OCI-LY7 (cell line): ENCODE measurements at regions of chr17 and their contacts with region 1.

Region 1: DNA sequence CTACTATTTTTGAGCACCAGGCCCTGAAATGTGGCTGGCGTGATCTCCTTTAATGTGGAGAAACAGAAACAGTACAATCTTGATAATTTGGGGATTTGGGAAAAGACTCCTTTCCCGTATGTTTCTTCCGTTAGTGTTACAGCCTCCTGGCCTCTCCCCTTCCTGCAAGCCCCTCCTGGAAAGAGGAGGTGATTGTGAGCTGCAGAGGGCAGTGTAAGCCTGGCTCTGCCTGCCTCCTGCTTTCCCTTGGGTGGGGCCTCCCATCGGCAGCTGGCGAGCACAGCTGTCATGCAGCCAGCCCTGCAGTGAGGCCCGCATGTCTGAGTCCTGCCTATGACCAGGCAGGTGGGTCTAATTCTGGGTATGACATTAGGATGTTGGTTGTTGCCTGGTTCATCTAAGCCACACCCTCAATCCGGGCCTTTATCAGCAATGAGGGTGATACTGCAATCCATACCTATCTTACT is 48.7 kb upstream of the WSB1 start:
- DNase-seq: peak; percentile 77
- H3K4me3 ChIP-seq: no peak overlapping the region
- H3K27ac ChIP-seq: no peak overlapping the region
- H3K4me1 ChIP-seq: peaks cover 14% of the 10 kb centered on the region
- CTCF ChIP-seq: peak; percentile 79

Region 2: GRCh38 chr17:27332485-27333409 is 87.5 kb after region 1 on chr17:
- CTCF ChIA-PET with region 1: interaction called, 3 read pairs
- POLR2A ChIA-PET with region 1: interaction called, 4 read pairs
- intact Hi-C with region 1: loop called (anchors 1 kb)
- DNase-seq: peak; percentile 72
- H3K4me3 ChIP-seq: peak overlapping the region; percentile 59
- H3K27ac ChIP-seq: no peak overlapping the region
- H3K4me1 ChIP-seq: peaks cover 15% of the 10 kb centered on the region
- CTCF ChIP-seq: peak; percentile 77

Region 3: DNA sequence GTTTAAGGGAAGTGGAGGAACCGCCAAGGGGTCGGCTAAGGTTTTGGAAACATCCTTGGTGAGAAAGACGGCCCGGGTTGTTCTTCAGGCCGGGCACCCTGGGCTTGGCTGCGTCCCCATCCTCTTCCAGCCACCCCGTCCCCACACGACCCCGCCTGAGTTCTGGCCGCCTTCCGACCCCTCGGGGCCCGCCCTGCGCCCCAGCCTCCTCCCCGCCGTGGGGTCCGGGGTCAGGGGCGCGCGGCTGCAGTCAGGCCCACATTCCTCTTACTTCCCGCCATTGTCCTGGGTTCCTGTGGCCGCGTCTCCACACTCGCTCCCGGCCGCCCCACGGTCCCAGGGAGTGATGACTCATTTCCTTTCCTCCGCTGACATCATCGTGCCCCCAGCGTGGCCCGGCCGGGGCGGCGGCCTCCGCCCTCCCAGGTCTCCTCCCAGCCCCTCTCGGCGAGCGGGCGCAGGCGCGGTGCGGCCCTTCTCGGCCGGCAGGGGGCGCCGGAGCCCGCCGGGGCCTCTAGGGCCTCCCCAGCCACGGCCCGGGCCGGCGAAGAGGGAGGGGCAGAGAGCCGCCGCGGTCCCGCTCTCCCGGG is 108.3 kb after region 1 on chr17:
- CTCF ChIA-PET with region 1: no interaction called
- POLR2A ChIA-PET with region 1: no interaction called
- intact Hi-C with region 1: loop called (anchors 2 kb)
- DNase-seq: peak; percentile 85
- H3K4me3 ChIP-seq: peak overlapping the region; percentile 84
- H3K27ac ChIP-seq: peak overlapping the region; percentile 8
- H3K4me1 ChIP-seq: peaks cover 17% of the 10 kb centered on the region
- CTCF ChIP-seq: peak; percentile 88

Region 4: GRCh38 chr17:27381007-27381501 is 135.8 kb after region 1 on chr17:
- CTCF ChIA-PET with region 1: no interaction called
- POLR2A ChIA-PET with region 1: no interaction called
- intact Hi-C with region 1: loop called (anchors 2 kb)
- DNase-seq: peak; percentile 70
- H3K4me3 ChIP-seq: no peak overlapping the region
- H3K27ac ChIP-seq: no peak overlapping the region
- H3K4me1 ChIP-seq: no peaks in the 10 kb centered on the region
- CTCF ChIP-seq: peak; percentile 88